ENCODE measurements at regions of chr20 and their contacts with region 1.

Region 1: GRCh38 chr20:53739799-53740785 is 146.5 kb upstream of the ZNF217 start:
- DNase-seq: peak; percentile 14
- H3K4me3 Mint-ChIP-seq: peak overlapping the region; percentile 82
- H3K27ac Mint-ChIP-seq: peak overlapping the region; percentile 93
- H3K4me1 Mint-ChIP-seq: peaks cover 72% of the 10 kb centered on the region
- H3K27me3 Mint-ChIP-seq: no peaks in the 10 kb centered on the region

Region 2: DNA sequence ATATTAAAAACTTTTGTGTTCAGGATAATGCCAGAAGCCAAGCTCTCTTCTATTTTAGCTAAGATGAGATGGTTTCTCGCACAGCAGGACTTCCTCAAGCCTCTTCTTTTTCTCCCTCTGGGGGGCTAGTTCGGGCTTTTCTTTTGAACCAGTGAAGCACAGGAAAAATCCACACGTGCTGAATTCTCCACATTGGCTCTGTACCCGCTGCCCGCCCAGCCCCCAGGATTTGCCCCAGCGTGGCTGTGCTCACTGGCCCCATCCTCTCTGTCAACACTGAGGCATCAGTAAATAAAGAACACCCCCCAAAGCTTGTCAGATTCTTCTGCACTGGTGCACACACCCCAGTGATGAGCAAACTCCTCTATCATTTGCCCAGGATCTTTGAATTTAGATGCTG is 379.2 kb before region 1 on chr20:
- intact Hi-C with region 1: no loop called
- DNase-seq: no peak
- H3K4me3 Mint-ChIP-seq: no peak overlapping the region
- H3K27ac Mint-ChIP-seq: no peak overlapping the region
- H3K4me1 Mint-ChIP-seq: no peaks in the 10 kb centered on the region
- H3K27me3 Mint-ChIP-seq: no peaks in the 10 kb centered on the region

Region 3: GRCh38 chr20:53718142-53719021 is 21.7 kb before region 1 on chr20:
- intact Hi-C with region 1: loop called (anchors 2 kb)
- DNase-seq: no peak
- H3K4me3 Mint-ChIP-seq: no peak overlapping the region
- H3K27ac Mint-ChIP-seq: no peak overlapping the region
- H3K4me1 Mint-ChIP-seq: peaks cover 27% of the 10 kb centered on the region
- H3K27me3 Mint-ChIP-seq: no peaks in the 10 kb centered on the region

Region 4: DNA sequence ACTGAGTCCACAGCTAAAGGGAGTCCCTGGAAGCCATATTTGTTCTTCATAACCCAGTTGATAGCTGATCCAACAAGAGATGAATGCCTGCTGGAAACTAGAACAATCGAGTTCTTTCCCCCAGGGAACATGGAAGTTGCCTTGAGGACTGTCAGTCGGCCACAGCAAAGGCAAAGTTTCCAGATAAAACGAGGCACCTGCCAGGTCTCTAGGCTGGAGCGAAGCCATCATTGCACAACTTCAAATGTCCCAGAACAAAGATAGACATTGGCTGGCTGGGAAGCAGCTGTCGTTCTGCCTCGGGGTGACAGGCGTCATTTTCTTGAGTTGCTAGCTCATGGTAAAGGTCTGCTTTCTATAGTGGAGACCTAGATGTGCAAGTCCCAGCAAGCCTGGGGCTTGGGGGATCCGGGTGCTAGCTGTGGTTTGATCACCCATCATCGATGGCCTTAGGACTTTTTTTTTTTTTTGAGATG is 38.0 kb after region 1 on chr20:
- intact Hi-C with region 1: no loop called
- DNase-seq: no peak
- H3K4me3 Mint-ChIP-seq: no peak overlapping the region
- H3K27ac Mint-ChIP-seq: no peak overlapping the region
- H3K4me1 Mint-ChIP-seq: no peaks in the 10 kb centered on the region
- H3K27me3 Mint-ChIP-seq: no peaks in the 10 kb centered on the region